Activated CD4-positive, alpha-beta memory T cell treated with anti-CD3 and anti-CD28 coated beads for 36 hours (primary cell): ENCODE measurements at regions of chr11 and their contacts with region 1.

Region 1: GRCh38 chr11:17354601-17354991 is 3.0 kb downstream of the NCR3LG1 start:
- DNase-seq: peak; percentile 70
- H3K4me3 Mint-ChIP-seq: peak overlapping the region; percentile 2
- H3K27ac Mint-ChIP-seq: no peak overlapping the region
- H3K4me1 Mint-ChIP-seq: peaks cover 33% of the 10 kb centered on the region
- H3K27me3 Mint-ChIP-seq: peaks cover 16% of the 10 kb centered on the region

Region 2: GRCh38 chr11:16346975-16347374 is 1007.6 kb before region 1 on chr11:
- CTCF ChIA-PET with region 1: no interaction called
- POLR2A ChIA-PET with region 1: no interaction called
- intact Hi-C with region 1: no loop called
- DNase-seq: no peak
- H3K4me3 Mint-ChIP-seq: no peak overlapping the region
- H3K27ac Mint-ChIP-seq: no peak overlapping the region
- H3K4me1 Mint-ChIP-seq: no peaks in the 10 kb centered on the region
- H3K27me3 Mint-ChIP-seq: no peaks in the 10 kb centered on the region

Region 3: DNA sequence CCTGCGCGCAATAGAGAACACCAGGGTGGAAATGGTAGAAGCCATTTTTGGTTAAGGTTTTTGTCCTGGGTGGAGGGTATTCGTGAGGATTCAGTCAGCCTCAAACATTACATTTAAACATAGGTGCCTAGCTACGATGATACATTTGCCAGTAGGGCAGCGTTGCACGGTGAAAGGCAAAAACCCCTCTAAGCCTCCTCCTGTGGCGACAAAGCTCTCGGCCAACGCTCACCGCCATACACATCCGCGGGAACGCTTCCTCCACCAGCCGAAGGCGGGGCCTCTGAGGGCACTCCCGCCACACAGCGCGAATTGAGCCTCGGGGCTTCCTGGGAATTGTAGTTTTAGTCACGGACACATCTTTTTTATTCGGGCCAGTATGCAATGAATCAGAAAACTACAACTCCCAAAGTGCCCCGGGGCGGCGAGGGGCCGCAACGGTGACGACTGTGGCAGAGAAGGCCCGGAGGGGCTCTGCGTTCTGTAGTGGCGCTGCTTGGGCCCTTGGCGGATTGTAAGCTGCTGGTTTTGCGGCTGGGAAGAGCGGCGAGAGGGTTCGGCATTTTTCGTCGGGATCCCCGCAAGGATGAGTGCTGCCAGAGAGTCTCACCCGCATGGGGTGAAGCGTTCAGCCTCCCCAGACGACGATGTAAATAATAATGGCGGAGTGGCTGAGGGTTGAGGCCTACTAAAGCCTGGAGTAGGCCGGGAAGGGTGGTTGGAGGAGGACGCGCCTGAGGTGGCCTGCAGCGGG is 616.2 kb before region 1 on chr11 and contains the start of gene C11orf58:
- CTCF ChIA-PET with region 1: no interaction called
- POLR2A ChIA-PET with region 1: no interaction called
- intact Hi-C with region 1: loop called (anchors 5 kb)
- DNase-seq: peak; percentile 97
- H3K4me3 Mint-ChIP-seq: no peak within 1 kb of the TSS
- H3K27ac Mint-ChIP-seq: no peak within 1 kb of the TSS
- H3K4me1 Mint-ChIP-seq: peaks cover 22% of the 10 kb centered on the region
- H3K27me3 Mint-ChIP-seq: no peaks in the 10 kb centered on the region
- total RNA-seq, gene C11orf58: 132 to 134 TPM

Region 4: GRCh38 chr11:17077520-17078401 is 276.8 kb before region 1 on chr11 and contains the start of gene RPS13:
- CTCF ChIA-PET with region 1: no interaction called
- POLR2A ChIA-PET with region 1: interaction called, 4 read pairs
- intact Hi-C with region 1: loop called (anchors 1 kb)
- DNase-seq: peak; percentile 97
- H3K4me3 Mint-ChIP-seq: peak within 1 kb of the TSS; percentile 96
- H3K27ac Mint-ChIP-seq: peak within 1 kb of the TSS; percentile 93
- H3K4me1 Mint-ChIP-seq: peaks cover 34% of the 10 kb centered on the region
- H3K27me3 Mint-ChIP-seq: no peaks in the 10 kb centered on the region
- total RNA-seq, gene RPS13: 1,729 to 1,745 TPM

Region 5: DNA sequence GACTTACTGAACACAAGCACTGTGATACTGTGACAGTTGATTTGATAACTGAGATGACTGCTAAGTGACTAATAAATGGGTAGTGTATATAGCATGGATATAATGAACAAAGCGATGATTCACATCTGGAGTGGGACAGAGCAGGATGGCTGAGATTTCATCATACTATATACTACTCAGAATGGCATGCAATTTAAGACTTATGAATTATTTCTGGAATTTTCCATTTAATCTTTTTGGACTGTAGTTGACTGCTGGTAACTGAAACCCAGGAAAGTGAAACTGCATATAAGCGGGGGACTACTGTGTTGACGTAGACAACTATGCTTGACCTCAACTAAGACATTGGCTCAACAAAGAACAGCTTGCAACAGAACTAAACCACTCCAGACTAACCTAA is 98.1 kb before region 1 on chr11:
- CTCF ChIA-PET with region 1: interaction called, 3 read pairs
- POLR2A ChIA-PET with region 1: no interaction called
- intact Hi-C with region 1: loop called (anchors 2 kb)
- DNase-seq: no peak
- H3K4me3 Mint-ChIP-seq: no peak overlapping the region
- H3K27ac Mint-ChIP-seq: no peak overlapping the region
- H3K4me1 Mint-ChIP-seq: peaks cover 22% of the 10 kb centered on the region
- H3K27me3 Mint-ChIP-seq: peaks cover 10% of the 10 kb centered on the region

Region 6: DNA sequence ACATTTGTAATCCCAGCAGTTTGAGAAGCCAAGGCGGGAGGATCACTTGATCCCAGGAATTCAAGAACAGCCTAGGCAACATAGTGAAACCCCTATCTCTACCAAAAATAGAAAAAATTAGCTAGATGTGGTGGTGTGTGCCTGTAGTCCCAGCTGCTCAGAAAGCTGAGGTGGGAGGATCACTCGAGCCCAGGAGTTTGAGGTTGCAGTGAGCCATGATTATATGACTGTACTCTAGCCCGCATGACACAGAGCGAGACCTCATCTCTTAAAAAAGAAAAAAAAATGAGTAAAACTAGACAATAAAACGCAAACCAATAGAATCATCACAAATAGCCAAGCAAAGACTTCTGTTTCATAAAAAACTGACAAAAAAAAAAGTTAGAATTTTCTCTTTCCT is 56.3 kb before region 1 on chr11:
- CTCF ChIA-PET with region 1: interaction called, 7 read pairs
- POLR2A ChIA-PET with region 1: interaction called, 3 read pairs
- intact Hi-C with region 1: loop called (anchors 1 kb)
- DNase-seq: peak; percentile 84
- H3K4me3 Mint-ChIP-seq: no peak overlapping the region
- H3K27ac Mint-ChIP-seq: no peak overlapping the region
- H3K4me1 Mint-ChIP-seq: peaks cover 36% of the 10 kb centered on the region
- H3K27me3 Mint-ChIP-seq: no peaks in the 10 kb centered on the region

Region 7: GRCh38 chr11:17400048-17400775 is 45.6 kb after region 1 on chr11:
- CTCF ChIA-PET with region 1: no interaction called
- POLR2A ChIA-PET with region 1: no interaction called
- intact Hi-C with region 1: no loop called
- DNase-seq: no peak
- H3K4me3 Mint-ChIP-seq: no peak overlapping the region
- H3K27ac Mint-ChIP-seq: no peak overlapping the region
- H3K4me1 Mint-ChIP-seq: no peaks in the 10 kb centered on the region
- H3K27me3 Mint-ChIP-seq: no peaks in the 10 kb centered on the region

Region 8: GRCh38 chr11:17504330-17505107 is 149.9 kb after region 1 on chr11:
- CTCF ChIA-PET with region 1: interaction called, 5 read pairs
- POLR2A ChIA-PET with region 1: no interaction called
- intact Hi-C with region 1: loop called (anchors 1 kb)
- DNase-seq: peak; percentile 81
- H3K4me3 Mint-ChIP-seq: no peak overlapping the region
- H3K27ac Mint-ChIP-seq: no peak overlapping the region
- H3K4me1 Mint-ChIP-seq: no peaks in the 10 kb centered on the region
- H3K27me3 Mint-ChIP-seq: peaks cover 10% of the 10 kb centered on the region